Caco-2 (cell line): ENCODE measurements at regions of chr10 and their contacts with region 1.

Region 1: GRCh38 chr10:44925224-44925623 is 14.1 kb downstream of the TMEM72 start:
- DNase-seq: peak; percentile 73 to 78
- H3K4me3 ChIP-seq: no peak overlapping the region
- H3K4me3 Mint-ChIP-seq: no peak overlapping the region
- H3K27ac Mint-ChIP-seq: no peak overlapping the region
- H3K4me1 ChIP-seq: peaks cover 10% of the 10 kb centered on the region; the same call in 1 of the 2 replicates
- H3K4me1 Mint-ChIP-seq: no peaks in the 10 kb centered on the region
- H3K27me3 ChIP-seq: no peaks in the 10 kb centered on the region
- H3K27me3 Mint-ChIP-seq: peaks cover 13% of the 10 kb centered on the region
- CTCF ChIP-seq: peak; percentile 69 to 89

Region 2: GRCh38 chr10:44878706-44879530 is 46.3 kb before region 1 on chr10:
- CTCF ChIA-PET with region 1: interaction called, 17 read pairs
- POLR2A ChIA-PET with region 1: no interaction called
- intact Hi-C with region 1: loop called (anchors 1 kb)
- DNase-seq: peak; percentile 86 to 88
- H3K4me3 ChIP-seq: peak overlapping the region; percentile 20
- H3K4me3 Mint-ChIP-seq: peak overlapping the region; percentile 77
- H3K27ac Mint-ChIP-seq: no peak overlapping the region
- H3K4me1 ChIP-seq: no peaks in the 10 kb centered on the region
- H3K4me1 Mint-ChIP-seq: no peaks in the 10 kb centered on the region
- H3K27me3 ChIP-seq: peaks cover 6% of the 10 kb centered on the region
- H3K27me3 Mint-ChIP-seq: peaks cover 33% of the 10 kb centered on the region
- CTCF ChIP-seq: peak in 1 of 2 experiments; percentile 59

Region 3: DNA sequence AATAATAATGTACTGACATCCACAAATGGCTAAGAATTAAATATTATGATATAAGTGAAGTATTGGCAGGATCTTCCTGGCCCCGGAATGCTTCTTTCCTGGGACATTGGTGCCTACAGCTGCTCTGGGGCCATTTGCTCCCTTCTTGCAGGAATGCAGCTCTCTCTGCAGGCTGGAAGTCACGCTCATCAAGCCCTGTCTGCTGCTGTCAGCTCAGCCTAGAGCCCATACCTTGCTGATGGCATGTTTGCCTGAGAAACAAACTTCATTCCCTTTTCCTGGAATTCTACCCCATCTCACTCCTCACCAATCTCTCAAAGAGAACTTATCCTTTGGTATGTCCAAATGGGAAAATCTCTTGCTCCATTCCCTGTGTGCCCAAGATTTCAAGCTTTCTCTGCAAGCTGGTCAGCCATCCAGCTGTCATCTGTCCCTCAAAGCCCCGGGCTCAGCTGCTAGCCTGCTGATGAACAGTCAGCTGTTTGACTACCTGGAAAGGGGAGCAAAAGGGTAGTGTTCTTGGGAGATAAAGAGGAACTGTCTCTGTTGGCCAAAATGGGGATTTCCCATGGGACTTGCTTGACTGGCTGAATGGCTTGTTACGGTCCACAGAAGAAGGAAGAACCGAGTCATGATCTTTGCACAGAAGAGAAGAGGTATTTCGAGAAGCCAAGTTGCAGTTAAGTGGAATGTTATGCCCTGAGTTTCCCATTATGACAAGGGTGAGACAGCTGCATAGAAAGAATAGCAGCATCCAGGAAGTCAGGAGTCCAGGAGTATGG is 22.3 kb after region 1 on chr10:
- CTCF ChIA-PET with region 1: no interaction called
- POLR2A ChIA-PET with region 1: no interaction called
- intact Hi-C with region 1: no loop called
- DNase-seq: no peak
- H3K4me3 ChIP-seq: no peak overlapping the region
- H3K4me3 Mint-ChIP-seq: no peak overlapping the region
- H3K27ac Mint-ChIP-seq: no peak overlapping the region
- H3K4me1 ChIP-seq: peaks cover 38% of the 10 kb centered on the region
- H3K4me1 Mint-ChIP-seq: peaks cover 31% of the 10 kb centered on the region
- H3K27me3 ChIP-seq: no peaks in the 10 kb centered on the region
- H3K27me3 Mint-ChIP-seq: no peaks in the 10 kb centered on the region
- CTCF ChIP-seq: no peak

Region 4: GRCh38 chr10:45160271-45160670 is 235.0 kb after region 1 on chr10:
- CTCF ChIA-PET with region 1: no interaction called
- POLR2A ChIA-PET with region 1: no interaction called
- intact Hi-C with region 1: no loop called
- DNase-seq: no peak
- H3K4me3 ChIP-seq: no peak overlapping the region
- H3K4me3 Mint-ChIP-seq: no peak overlapping the region
- H3K27ac Mint-ChIP-seq: no peak overlapping the region
- H3K4me1 ChIP-seq: no peaks in the 10 kb centered on the region
- H3K4me1 Mint-ChIP-seq: no peaks in the 10 kb centered on the region
- H3K27me3 ChIP-seq: no peaks in the 10 kb centered on the region
- H3K27me3 Mint-ChIP-seq: peaks cover 22% of the 10 kb centered on the region
- CTCF ChIP-seq: no peak